ENCODE measurements at regions of chr2 and their contacts with region 1.

Region 1: GRCh38 chr2:64114063-64114911 is 29.9 kb downstream of the PELI1 start:
- DNase-seq: peak in 5 of 9 donors; percentile 7 to 45 (median 34)
- ATAC-seq: peak; percentile 81
- H3K4me3 ChIP-seq: no peak overlapping the region
- H3K4me3 Mint-ChIP-seq: peak overlapping the region; percentile 12 to 75 (median 66)
- H3K27ac ChIP-seq: no peak overlapping the region
- H3K27ac Mint-ChIP-seq: peak overlapping the region; percentile 12 to 75 (median 60)
- H3K4me1 ChIP-seq: peaks cover 10 to 32% of the 10 kb centered on the region in 2 donors
- H3K4me1 Mint-ChIP-seq: peaks cover 55 to 94% (median 85%) of the 10 kb centered on the region in 7 donors
- H3K27me3 ChIP-seq: no peaks in the 10 kb centered on the region
- H3K27me3 Mint-ChIP-seq: no peaks in the 10 kb centered on the region

Region 2: GRCh38 chr2:62565309-62565908 is 1548.9 kb before region 1 on chr2:
- CTCF ChIA-PET with region 1: no interaction called
- POLR2A ChIA-PET with region 1: no interaction called
- intact Hi-C with region 1: no loop called
- DNase-seq: no peak
- ATAC-seq: no peak
- H3K4me3 ChIP-seq: no peak overlapping the region
- H3K4me3 Mint-ChIP-seq: no peak overlapping the region
- H3K27ac ChIP-seq: no peak overlapping the region
- H3K27ac Mint-ChIP-seq: no peak overlapping the region
- H3K4me1 ChIP-seq: no peaks in the 10 kb centered on the region
- H3K4me1 Mint-ChIP-seq: no peaks in the 10 kb centered on the region
- H3K27me3 ChIP-seq: no peaks in the 10 kb centered on the region
- H3K27me3 Mint-ChIP-seq: peaks cover 14 to 32% (median 26%) of the 10 kb centered on the region in 5 donors

Region 3: GRCh38 chr2:64101141-64101591 is 13.1 kb before region 1 on chr2:
- CTCF ChIA-PET with region 1: interaction called, 3 read pairs
- POLR2A ChIA-PET with region 1: interaction called, 8 read pairs
- intact Hi-C with region 1: loop called (anchors 1 kb)
- DNase-seq: peak in 6 of 9 donors; percentile 10 to 57 (median 44)
- ATAC-seq: peak; percentile 56
- H3K4me3 ChIP-seq: no peak overlapping the region
- H3K4me3 Mint-ChIP-seq: peak overlapping the region in 9 of 10 donors; percentile 18 to 83 (median 55)
- H3K27ac ChIP-seq: peak overlapping the region; percentile 33
- H3K27ac Mint-ChIP-seq: peak overlapping the region; percentile 44 to 88 (median 80)
- H3K4me1 ChIP-seq: peaks cover 0 to 16% of the 10 kb centered on the region in 2 donors
- H3K4me1 Mint-ChIP-seq: peaks cover 14 to 66% (median 60%) of the 10 kb centered on the region in 7 donors
- H3K27me3 ChIP-seq: no peaks in the 10 kb centered on the region
- H3K27me3 Mint-ChIP-seq: no peaks in the 10 kb centered on the region

Region 4: DNA sequence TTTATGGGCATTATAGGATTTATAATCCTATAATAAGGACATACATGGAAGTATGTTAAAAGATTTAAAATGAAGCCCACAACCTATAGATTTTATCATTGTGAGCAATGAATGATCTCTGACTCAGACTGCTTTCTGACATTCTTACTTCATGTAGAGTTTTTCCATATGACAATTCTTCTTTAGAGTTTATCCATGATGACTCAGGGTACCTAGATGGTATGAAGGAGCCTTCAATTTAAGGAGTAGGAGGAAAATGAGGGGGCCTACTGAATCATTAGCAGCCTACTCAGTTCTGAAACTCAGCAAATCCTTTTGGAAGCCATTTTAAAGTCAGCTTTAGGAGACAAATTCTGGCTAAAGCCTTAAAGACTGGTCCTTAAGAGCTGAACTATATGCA is 19.5 kb after region 1 on chr2:
- CTCF ChIA-PET with region 1: no interaction called
- POLR2A ChIA-PET with region 1: interaction called, 3 read pairs
- intact Hi-C with region 1: loop called in 1 of 2 experiments (anchors 2 kb)
- DNase-seq: no peak
- ATAC-seq: no peak
- H3K4me3 ChIP-seq: no peak overlapping the region
- H3K4me3 Mint-ChIP-seq: peak overlapping the region in 2 of 10 donors; percentile 43 to 59
- H3K27ac ChIP-seq: no peak overlapping the region
- H3K27ac Mint-ChIP-seq: peak overlapping the region in 1 of 9 donors; percentile 68
- H3K4me1 ChIP-seq: peaks cover 4 to 41% of the 10 kb centered on the region in 2 donors
- H3K4me1 Mint-ChIP-seq: peaks cover 46 to 89% (median 85%) of the 10 kb centered on the region in 7 donors
- H3K27me3 ChIP-seq: no peaks in the 10 kb centered on the region
- H3K27me3 Mint-ChIP-seq: no peaks in the 10 kb centered on the region

Region 5: DNA sequence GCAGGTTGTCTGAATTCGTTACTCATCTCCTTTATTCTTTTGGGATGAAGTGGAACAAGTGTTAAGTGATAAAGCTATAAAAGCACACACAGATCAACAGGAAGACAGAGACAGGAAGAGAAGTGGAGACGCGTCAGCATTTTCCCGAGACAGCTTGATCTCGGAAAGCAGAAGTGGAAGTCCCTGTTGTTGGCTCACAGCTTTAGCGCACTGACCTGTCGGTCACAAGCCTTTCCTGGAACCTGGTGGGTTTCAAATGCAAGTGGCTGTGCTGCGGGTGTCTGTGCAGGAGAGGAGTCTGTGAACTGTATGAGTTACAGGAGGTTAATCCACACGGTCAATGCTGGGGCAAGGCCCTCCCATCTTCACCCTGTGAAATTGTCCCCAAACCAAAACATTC is 146.5 kb after region 1 on chr2:
- CTCF ChIA-PET with region 1: interaction called, 4 read pairs
- POLR2A ChIA-PET with region 1: interaction called, 11 read pairs
- intact Hi-C with region 1: no loop called
- DNase-seq: peak in 7 of 9 donors; percentile 12 to 31 (median 26)
- ATAC-seq: peak; percentile 87
- H3K4me3 ChIP-seq: peak overlapping the region; percentile 31
- H3K4me3 Mint-ChIP-seq: peak overlapping the region; percentile 68 to 89 (median 73)
- H3K27ac ChIP-seq: peak overlapping the region; percentile 39
- H3K27ac Mint-ChIP-seq: peak overlapping the region; percentile 72 to 94 (median 87)
- H3K4me1 ChIP-seq: peaks cover 0 to 11% of the 10 kb centered on the region in 2 donors
- H3K4me1 Mint-ChIP-seq: peaks cover 7 to 13% (median 8%) of the 10 kb centered on the region in 7 donors
- H3K27me3 ChIP-seq: no peaks in the 10 kb centered on the region
- H3K27me3 Mint-ChIP-seq: peaks cover 0 to 2% (median 0%) of the 10 kb centered on the region in 5 donors

Region 6: DNA sequence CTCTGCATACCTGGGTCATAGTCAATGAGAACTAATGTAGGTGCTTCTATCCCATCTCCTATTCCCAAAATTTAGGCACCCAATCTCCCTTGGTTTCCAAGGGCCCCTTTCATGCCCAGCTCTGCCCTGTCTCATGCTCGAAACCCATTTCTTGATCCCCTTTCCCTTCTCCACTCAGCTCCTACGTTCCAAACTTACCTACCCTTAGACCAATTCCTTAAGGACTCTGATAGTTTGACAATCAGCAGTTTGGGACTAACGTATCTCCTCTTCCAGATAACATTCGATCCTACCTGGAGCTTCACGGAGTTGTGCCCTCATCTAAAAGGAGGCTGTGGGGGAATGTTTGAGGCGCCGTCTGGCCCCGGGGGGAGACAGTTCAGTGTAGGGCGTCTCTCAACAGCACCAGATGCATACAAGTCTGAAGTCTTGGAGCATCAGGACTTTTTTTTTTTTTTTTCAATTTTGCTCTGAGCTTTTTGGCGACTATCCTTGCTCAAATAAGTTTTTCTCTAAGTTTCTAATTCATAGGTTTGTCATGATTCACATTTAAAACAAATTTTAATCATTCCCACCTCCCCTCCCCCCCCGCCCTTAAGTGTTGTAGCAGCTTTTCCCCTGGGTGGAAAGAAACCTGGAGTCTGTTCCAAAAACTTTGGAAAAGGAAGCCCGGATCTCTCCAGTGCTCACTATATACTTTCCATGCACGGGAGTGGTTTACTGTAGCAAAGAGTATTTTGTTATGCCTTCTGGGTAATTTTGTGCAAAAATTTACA is 198.5 kb after region 1 on chr2:
- CTCF ChIA-PET with region 1: no interaction called
- POLR2A ChIA-PET with region 1: no interaction called
- intact Hi-C with region 1: no loop called
- DNase-seq: no peak
- ATAC-seq: no peak
- H3K4me3 ChIP-seq: no peak overlapping the region
- H3K4me3 Mint-ChIP-seq: no peak overlapping the region
- H3K27ac ChIP-seq: no peak overlapping the region
- H3K27ac Mint-ChIP-seq: no peak overlapping the region
- H3K4me1 ChIP-seq: no peaks in the 10 kb centered on the region
- H3K4me1 Mint-ChIP-seq: peaks cover 0 to 6% (median 0%) of the 10 kb centered on the region in 7 donors
- H3K27me3 ChIP-seq: no peaks in the 10 kb centered on the region
- H3K27me3 Mint-ChIP-seq: peaks cover 0 to 42% (median 0%) of the 10 kb centered on the region in 5 donors